ENCODE measurements at regions of chr1 and their contacts with region 1.

Region 1: DNA sequence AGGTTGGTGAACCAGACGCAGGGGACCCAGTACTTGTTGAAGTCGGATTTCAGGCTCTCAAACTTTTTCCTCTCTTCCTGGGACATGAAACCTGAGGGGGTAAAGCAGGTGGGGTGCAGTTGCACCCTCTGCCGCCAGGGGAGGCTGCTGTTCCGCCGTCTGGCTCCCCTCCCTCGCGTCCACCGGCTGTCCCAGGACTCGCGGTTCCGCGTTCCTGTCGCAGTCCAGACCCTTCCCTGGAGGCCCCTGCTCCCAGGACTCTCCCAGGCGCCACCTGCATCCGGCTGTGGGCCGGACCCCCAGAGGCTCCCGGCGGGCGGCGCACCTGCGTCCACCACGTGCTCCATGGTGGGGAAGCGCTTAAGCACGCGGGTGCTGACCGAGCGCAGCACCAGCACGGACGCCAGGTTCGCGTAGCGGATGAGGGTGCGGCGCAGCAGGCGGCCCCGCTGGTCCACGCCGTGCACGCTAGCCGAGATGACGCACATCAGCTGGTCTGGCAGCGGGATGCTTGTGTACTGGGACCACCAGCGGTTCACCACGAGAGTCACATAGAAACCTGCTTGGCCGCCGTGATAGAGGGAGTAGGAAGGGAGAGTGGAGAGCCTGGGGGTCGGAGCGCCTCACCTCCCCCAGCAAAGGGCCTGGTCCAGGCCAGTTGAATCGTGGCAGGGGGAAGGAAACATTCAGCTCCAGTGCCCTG is 1.7 kb downstream of the BEST4 start:
- DNase-seq: peak; percentile 82
- ATAC-seq: peak; percentile 64
- H3K4me3 Mint-ChIP-seq: peak overlapping the region; percentile 64
- H3K27ac Mint-ChIP-seq: peak overlapping the region; percentile 74
- H3K4me1 Mint-ChIP-seq: peaks cover 42% of the 10 kb centered on the region
- H3K27me3 Mint-ChIP-seq: no peaks in the 10 kb centered on the region

Region 2: DNA sequence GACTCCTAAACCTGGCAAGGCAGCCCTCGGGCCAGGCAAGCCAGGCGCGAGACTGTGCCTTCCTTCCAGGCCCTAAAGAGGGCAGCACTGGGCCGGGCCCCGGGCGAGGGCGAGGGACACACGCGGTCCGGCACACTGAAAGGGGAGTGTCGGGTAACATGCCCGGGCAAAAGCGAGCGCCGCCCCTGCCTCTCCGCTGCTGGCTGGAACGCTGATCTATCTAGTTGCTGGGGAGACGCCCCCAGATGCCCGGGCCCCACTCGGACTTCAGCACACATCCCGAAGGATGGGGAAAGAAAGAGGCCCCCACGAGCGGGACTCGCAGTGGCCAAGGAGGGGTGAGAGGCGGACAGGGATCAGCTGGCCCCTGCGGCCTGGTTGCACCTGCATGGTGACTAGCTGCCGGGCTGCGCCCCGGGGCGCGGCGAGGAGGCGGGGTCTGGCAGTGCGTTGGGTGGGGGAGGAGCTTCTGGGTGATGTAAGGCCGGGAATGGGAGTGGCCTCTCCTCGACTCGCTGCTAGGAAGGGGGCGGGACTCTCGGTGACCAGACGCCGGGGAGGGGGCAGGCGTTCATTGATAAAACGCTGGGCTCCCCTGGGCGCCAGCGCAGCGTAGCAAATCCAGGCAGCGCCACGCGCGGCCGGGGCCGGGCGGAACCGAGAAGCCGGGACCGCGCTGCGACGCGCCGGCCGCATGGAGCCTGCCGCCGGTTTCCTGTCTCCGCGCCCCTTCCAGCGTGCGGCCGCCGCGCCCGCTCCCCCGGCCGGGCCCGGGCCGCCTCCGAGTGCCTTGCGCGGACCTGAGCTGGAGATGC is 13.7 kb after region 1 on chr1 and contains the start of gene PLK3:
- CTCF ChIA-PET with region 1: interaction called, 28 read pairs
- POLR2A ChIA-PET with region 1: interaction called, 15 read pairs
- DNase-seq: peak; percentile 99
- ATAC-seq: peak; percentile 77
- H3K4me3 Mint-ChIP-seq: peak within 1 kb of the TSS; percentile 96
- H3K27ac Mint-ChIP-seq: peak within 1 kb of the TSS; percentile 100
- H3K4me1 Mint-ChIP-seq: peaks cover 42% of the 10 kb centered on the region
- H3K27me3 Mint-ChIP-seq: no peaks in the 10 kb centered on the region
- total RNA-seq, gene PLK3: 64.8 to 68.0 TPM

Region 3: GRCh38 chr1:44807262-44808062 is 21.2 kb after region 1 on chr1 and contains the start of gene DYNLT4:
- CTCF ChIA-PET with region 1: interaction called, 20 read pairs
- POLR2A ChIA-PET with region 1: interaction called, 12 read pairs
- DNase-seq: peak; percentile 94
- ATAC-seq: peak; percentile 52
- H3K4me3 Mint-ChIP-seq: peak within 1 kb of the TSS; percentile 65
- H3K27ac Mint-ChIP-seq: peak within 1 kb of the TSS; percentile 100
- H3K4me1 Mint-ChIP-seq: peaks cover 86% of the 10 kb centered on the region
- H3K27me3 Mint-ChIP-seq: no peaks in the 10 kb centered on the region
- total RNA-seq, gene DYNLT4: 1.8 to 2.3 TPM